PC-9 (cell line): ENCODE measurements at regions of chr6 and their contacts with region 1.

Region 1: GRCh38 chr6:125099211-125100073 is 54.1 kb upstream of the TPD52L1 start:
- DNase-seq: peak; percentile 57 to 74
- H3K4me3 ChIP-seq: peak overlapping the region; percentile 68
- H3K27ac ChIP-seq: no peak overlapping the region
- H3K4me1 ChIP-seq: peaks cover 24% of the 10 kb centered on the region
- H3K27me3 ChIP-seq: no peaks in the 10 kb centered on the region
- CTCF ChIP-seq: no peak

Region 2: DNA sequence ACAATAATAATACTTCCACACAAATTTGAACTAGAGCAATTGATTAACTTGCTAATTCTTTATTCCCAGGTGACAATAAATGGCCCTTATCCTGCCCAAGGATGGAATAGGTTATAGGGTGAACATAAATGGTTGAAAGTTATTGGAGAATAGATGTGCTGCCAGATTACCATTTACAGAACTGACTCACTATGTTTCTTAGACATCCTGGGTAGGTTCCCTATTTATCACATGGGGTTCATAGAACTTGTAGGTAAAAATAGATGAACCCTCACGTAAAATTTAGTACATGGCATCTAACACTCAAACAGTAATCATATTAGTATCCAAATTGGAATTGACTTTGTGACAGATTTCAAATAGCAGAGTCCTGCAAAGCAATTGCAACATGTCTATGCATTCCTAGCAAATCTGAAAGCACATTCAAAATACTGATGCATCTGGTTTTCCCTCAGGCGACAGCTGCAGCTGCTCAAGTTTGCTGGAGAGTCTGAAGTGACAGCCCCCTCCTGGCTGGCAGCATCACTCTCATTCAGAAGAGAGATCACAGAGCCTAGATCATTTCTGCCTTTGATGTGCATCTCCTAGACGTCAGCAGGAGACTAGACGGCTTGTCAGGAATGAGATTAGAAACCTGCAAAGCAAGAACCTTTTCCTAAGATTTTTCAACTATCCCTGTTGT is 217.4 kb before region 1 on chr6:
- CTCF ChIA-PET with region 1: no interaction called
- POLR2A ChIA-PET with region 1: interaction called, 8 read pairs
- intact Hi-C with region 1: loop called (anchors 2 kb)
- DNase-seq: peak; percentile 29 to 77
- H3K4me3 ChIP-seq: peak overlapping the region; percentile 33; the same call in 1 of the 2 replicates
- H3K27ac ChIP-seq: peak overlapping the region; percentile 70
- H3K4me1 ChIP-seq: peaks cover 37% of the 10 kb centered on the region
- H3K27me3 ChIP-seq: no peaks in the 10 kb centered on the region
- CTCF ChIP-seq: no peak

Region 3: GRCh38 chr6:124984668-124985338 is 114.6 kb before region 1 on chr6:
- CTCF ChIA-PET with region 1: no interaction called
- POLR2A ChIA-PET with region 1: no interaction called
- intact Hi-C with region 1: loop called (anchors 5 kb)
- DNase-seq: no peak
- H3K4me3 ChIP-seq: no peak overlapping the region
- H3K27ac ChIP-seq: peak overlapping the region; percentile 76
- H3K4me1 ChIP-seq: peaks cover 48% of the 10 kb centered on the region
- H3K27me3 ChIP-seq: no peaks in the 10 kb centered on the region
- CTCF ChIP-seq: no peak

Region 4: GRCh38 chr6:125082908-125083683 is 16.3 kb before region 1 on chr6:
- CTCF ChIA-PET with region 1: interaction called, 12 read pairs
- POLR2A ChIA-PET with region 1: no interaction called
- intact Hi-C with region 1: no loop called
- DNase-seq: no peak
- H3K4me3 ChIP-seq: no peak overlapping the region
- H3K27ac ChIP-seq: no peak overlapping the region
- H3K4me1 ChIP-seq: no peaks in the 10 kb centered on the region
- H3K27me3 ChIP-seq: no peaks in the 10 kb centered on the region
- CTCF ChIP-seq: no peak

Region 5: DNA sequence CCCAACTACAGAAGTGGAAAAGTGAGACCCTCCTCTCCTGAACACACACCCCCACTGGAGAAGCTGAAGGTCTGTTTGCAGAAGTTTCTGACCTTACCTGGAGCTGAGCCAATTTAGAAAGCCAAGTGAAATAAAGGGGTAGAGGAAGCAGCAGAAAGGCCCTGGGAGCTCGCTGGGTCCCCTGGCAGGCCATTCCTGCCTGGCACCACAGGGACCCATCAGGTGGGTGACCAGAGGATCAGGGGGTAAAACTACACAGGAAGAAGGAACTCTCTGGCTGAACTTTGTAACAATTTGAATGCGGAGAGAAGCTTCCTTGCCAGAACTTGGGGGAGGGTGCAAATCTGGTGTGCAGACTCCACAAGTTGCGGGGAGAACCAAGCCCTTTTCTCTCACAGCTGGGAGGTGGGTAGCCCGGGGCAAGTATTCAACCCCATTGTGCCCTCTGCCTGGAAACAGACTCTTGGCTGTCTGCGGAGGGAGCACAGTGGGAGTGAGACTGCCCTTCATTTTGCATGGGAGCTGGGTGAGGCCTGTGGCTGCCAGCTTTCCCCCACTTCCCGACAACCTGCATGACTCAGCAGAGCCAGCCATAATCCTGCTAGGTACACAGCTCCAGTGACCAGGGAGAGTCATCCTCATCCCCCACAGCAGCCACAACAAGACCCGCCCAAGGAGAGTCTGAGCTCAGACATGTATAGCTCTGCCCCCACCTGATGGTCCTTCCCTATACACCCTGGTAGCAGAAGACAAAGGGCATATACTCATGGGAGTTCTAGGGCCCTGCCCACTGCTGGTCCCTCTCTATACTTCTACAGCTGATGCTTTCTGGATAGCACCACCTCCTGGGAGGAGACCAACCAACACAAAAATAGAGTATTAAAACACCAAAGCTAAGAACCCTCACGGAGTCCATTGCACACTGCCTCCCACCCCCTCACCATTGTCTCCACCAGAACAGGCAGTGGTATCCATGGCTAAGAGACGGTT is 24.6 kb after region 1 on chr6:
- CTCF ChIA-PET with region 1: no interaction called
- POLR2A ChIA-PET with region 1: interaction called, 3 read pairs
- intact Hi-C with region 1: loop called (anchors 2 kb)
- DNase-seq: peak; percentile 57 to 84
- H3K4me3 ChIP-seq: no peak overlapping the region
- H3K27ac ChIP-seq: peak overlapping the region; percentile 30; the same call in 1 of the 2 replicates
- H3K4me1 ChIP-seq: peaks cover 19% of the 10 kb centered on the region
- H3K27me3 ChIP-seq: no peaks in the 10 kb centered on the region
- CTCF ChIP-seq: no peak; the same call in 1 of the 2 replicates